Heart left ventricle (tissue), 16 donors: ENCODE measurements at regions of chr20 and their contacts with region 1.

Region 1: GRCh38 chr20:36550797-36551299 is 9.5 kb downstream of the MYL9 start:
- DNase-seq: no peak
- ATAC-seq: peak; percentile 32 to 43 (median 37)
- H3K4me3 ChIP-seq: no peak overlapping the region
- H3K27ac ChIP-seq: peak overlapping the region in 10 of 12 donors; percentile 9 to 75 (median 48)
- H3K4me1 ChIP-seq: peaks cover 0 to 45% (median 5%) of the 10 kb centered on the region in 12 donors
- H3K27me3 ChIP-seq: no peaks in the 10 kb centered on the region
- CTCF ChIP-seq: no peak
- POLR2A ChIP-seq: no peak

Region 2: GRCh38 chr20:36591854-36592641 is 41.2 kb after region 1 on chr20:
- intact Hi-C with region 1: loop called (anchors 1 to 5 kb)
- DNase-seq: peak in 1 of 5 donors; percentile 35
- ATAC-seq: peak in 3 of 4 donors; percentile 51 to 61 (median 52)
- H3K4me3 ChIP-seq: no peak overlapping the region
- H3K27ac ChIP-seq: no peak overlapping the region
- H3K4me1 ChIP-seq: peaks cover 0 to 44% (median 0%) of the 10 kb centered on the region in 12 donors
- H3K27me3 ChIP-seq: no peaks in the 10 kb centered on the region
- CTCF ChIP-seq: peak; percentile 20 to 62 (median 46)
- POLR2A ChIP-seq: no peak

Region 3: DNA sequence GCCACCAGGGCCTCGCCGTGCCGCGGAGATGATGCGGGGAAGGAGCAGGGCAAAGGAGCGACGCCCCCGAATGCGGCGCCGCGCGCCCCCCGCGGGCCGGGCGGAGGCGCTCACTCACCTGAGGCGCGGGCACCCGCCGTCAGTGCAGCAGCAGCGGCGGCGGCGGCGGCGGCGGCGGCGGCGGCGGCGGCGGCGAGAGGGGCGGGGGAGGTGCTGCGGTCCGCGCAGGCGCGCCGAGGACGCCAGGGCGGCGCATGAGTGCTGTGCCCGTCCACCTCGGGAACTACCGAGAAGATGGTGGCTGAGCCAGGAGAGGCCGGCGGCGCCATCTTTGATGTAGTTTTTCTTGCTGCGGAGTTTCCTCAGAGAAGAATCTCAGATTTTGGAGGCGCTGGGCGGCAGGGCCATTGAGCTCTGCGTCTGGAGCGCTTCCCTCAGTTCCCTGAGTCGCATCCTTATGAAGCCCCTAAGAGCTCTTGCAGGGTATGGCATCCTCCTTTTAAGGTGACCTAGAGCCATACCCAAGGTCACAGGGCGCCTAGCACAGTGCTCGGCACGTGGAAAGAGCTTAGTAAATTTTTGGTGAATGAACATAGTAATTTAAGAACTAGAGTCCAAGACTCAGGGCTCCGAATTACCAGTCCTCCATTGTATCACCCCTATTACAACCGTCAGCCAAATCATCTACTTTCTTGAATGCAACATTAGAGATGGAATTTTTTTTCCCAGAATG is 195.2 kb after region 1 on chr20 and contains the start of gene NDRG3:
- intact Hi-C with region 1: loop called in 2 of 10 experiments (anchors 10 kb)
- DNase-seq: peak; percentile 94 to 97 (median 96)
- ATAC-seq: peak; percentile 89 to 96 (median 93)
- H3K4me3 ChIP-seq: peak within 1 kb of the TSS; percentile 71 to 99 (median 82)
- H3K27ac ChIP-seq: peak within 1 kb of the TSS; percentile 59 to 98 (median 91)
- H3K4me1 ChIP-seq: peaks cover 0 to 63% (median 22%) of the 10 kb centered on the region in 12 donors
- H3K27me3 ChIP-seq: no peaks in the 10 kb centered on the region
- CTCF ChIP-seq: no peak
- POLR2A ChIP-seq: peak in 1 of 2 donors; percentile 32
- total RNA-seq, gene NDRG3: 17.3 to 34.8 (median 31.1) TPM